ENCODE measurements at regions of chr17 and their contacts with region 1.

Region 1: DNA sequence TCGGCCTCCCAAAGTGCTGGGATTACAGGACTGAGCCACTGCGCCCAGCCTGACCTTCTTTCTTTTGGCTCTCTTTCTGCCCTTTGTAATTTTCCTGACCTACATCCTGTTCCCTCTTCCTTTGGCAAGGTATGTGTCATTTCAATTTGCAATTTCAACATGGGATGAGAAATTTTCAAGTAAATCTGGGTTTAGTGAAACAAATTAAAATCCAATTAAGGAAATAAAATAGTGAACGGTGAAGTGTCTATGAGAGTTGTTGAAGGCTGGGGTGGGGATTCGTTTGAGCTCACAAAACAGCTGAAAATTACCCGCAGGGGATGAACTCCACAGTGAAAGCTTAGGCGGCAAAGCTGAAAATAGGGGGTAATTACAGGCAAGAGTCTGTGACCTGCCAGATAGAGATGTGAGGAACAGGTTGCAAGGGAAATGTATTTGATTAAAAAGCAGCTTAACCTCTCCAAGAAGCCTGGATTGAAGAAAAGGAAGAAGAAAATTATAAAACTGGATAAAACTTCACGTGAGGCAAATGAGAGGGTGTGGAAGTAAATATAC is 277.7 kb downstream of the UTP18 start:
- DNase-seq: no peak
- ATAC-seq: no peak

Region 2: GRCh38 chr17:51298508-51299371 is 239.3 kb before region 1 on chr17:
- intact Hi-C with region 1: loop called (anchors 5 to 10 kb)
- DNase-seq: no peak
- ATAC-seq: no peak

Region 3: GRCh38 chr17:51371732-51372151 is 166.3 kb before region 1 on chr17:
- intact Hi-C with region 1: loop called in 1 of 2 experiments (anchors 5 kb)
- DNase-seq: peak; percentile 37
- ATAC-seq: peak; percentile 50 to 89

Region 4: GRCh38 chr17:51601622-51602261 is 63.7 kb after region 1 on chr17:
- intact Hi-C with region 1: no loop called
- DNase-seq: no peak
- ATAC-seq: no peak